Sigmoid colon (tissue), 7 donors: ENCODE measurements at regions of chr3 and their contacts with region 1.

Region 1: DNA sequence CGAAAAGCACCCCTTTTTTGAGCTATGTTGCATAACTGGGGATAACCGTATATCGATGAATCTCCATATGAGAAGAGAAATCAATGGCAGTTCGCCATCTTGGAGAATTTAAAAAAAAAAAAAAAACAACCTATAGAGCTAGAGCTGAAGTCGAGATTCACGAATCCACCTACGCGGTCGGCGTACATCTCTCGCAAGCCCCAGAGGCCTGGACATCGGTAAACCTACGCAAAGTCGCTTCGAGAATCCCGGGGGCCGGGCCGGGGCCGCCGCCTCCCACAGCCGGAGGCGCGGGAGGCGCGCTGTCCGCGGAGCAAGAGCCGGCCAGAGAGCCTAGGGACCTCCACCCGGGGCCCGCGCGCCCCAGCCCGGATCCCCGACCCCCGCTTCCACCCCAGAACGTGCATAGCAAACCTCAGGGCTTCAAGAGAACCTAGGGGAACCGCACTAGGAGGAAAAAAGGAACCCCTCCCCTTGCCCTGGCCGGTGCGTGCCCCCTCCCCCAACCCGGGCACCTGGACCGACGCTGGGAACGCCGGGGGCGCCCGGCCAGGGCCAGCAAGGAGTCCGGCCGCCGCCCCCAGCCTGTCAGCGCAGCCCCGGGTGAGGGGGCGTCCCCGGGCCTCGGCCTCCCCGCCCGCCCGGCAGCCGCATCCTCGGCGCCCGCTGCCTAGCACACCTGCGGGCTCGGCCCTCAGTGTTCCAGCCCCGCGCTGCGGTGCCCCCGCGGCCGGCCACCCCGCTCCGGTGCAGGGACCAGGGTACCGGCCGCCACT is 567 bp downstream of the PFN2 start:
- DNase-seq: peak; percentile 94
- H3K4me3 ChIP-seq: peak overlapping the region; percentile 79 to 98 (median 86)
- H3K27ac ChIP-seq: peak overlapping the region; percentile 92 to 98 (median 97)
- H3K4me1 ChIP-seq: peaks cover 0 to 47% (median 25%) of the 10 kb centered on the region in 4 donors
- H3K27me3 ChIP-seq: no peaks in the 10 kb centered on the region
- CTCF ChIP-seq: no peak
- EP300 ChIP-seq: no peak
- POLR2A ChIP-seq: peak in 1 of 2 donors; percentile 41

Region 2: GRCh38 chr3:150083655-150084042 is 113.5 kb after region 1 on chr3:
- intact Hi-C with region 1: loop called (anchors 2 kb)
- DNase-seq: peak; percentile 80
- H3K4me3 ChIP-seq: peak overlapping the region in 3 of 4 donors; percentile 26 to 40 (median 33)
- H3K27ac ChIP-seq: peak overlapping the region; percentile 18 to 77 (median 74)
- H3K4me1 ChIP-seq: peaks cover 0 to 33% (median 28%) of the 10 kb centered on the region in 4 donors
- H3K27me3 ChIP-seq: no peaks in the 10 kb centered on the region
- CTCF ChIP-seq: no peak
- EP300 ChIP-seq: peak in 2 of 4 donors; percentile 44 to 53
- POLR2A ChIP-seq: no peak

Region 3: DNA sequence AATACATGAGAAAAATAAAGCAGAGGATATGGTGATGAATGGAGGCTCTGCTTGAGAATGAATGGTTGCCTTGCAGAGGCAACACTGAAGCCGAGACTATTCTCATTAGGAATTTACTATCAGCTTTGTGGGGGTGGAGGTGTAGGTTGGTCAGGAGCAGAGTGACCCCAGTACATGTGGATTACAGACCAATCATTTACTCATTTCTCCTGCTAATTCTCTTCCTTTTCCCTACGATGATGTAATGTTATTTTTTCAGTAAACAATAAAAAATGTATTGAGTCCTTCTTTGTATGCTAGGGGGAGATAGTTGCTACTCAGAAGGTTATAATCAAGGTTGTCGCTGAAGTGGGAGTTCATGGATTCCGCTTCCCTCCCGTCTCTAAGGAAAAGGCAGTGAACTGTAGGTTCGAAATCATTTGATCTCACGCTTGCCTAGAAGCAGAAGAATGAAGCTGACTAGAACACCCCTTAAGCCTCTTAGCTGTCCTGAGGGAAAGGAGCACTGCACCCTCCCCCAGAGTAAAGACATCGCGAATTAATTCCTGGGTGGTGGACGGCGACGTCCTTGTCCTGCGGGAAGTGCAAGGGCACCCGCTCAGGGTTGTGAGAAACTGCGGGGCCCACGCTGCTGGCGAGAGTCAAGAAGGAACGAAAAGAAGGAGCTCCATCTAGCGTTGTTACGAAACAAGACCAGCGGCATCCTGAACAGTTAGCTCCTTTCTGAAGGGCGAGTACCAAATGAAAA is 213.7 kb after region 1 on chr3:
- intact Hi-C with region 1: loop called (anchors 1 kb)
- DNase-seq: peak; percentile 84
- H3K4me3 ChIP-seq: peak overlapping the region; percentile 7 to 39 (median 25)
- H3K27ac ChIP-seq: peak overlapping the region in 2 of 4 donors; percentile 2 to 58
- H3K4me1 ChIP-seq: peaks cover 0 to 20% (median 10%) of the 10 kb centered on the region in 4 donors
- H3K27me3 ChIP-seq: no peaks in the 10 kb centered on the region
- CTCF ChIP-seq: peak; percentile 38 to 59 (median 56)
- EP300 ChIP-seq: no peak
- POLR2A ChIP-seq: no peak

Region 4: GRCh38 chr3:150220799-150221198 is 250.7 kb after region 1 on chr3:
- intact Hi-C with region 1: loop called (anchors 2 kb)
- DNase-seq: no peak
- H3K4me3 ChIP-seq: peak overlapping the region in 3 of 4 donors; percentile 21 to 42 (median 34)
- H3K27ac ChIP-seq: peak overlapping the region in 1 of 4 donors; percentile 0
- H3K4me1 ChIP-seq: peaks cover 0 to 20% (median 14%) of the 10 kb centered on the region in 4 donors
- H3K27me3 ChIP-seq: no peaks in the 10 kb centered on the region
- CTCF ChIP-seq: no peak
- EP300 ChIP-seq: no peak
- POLR2A ChIP-seq: no peak

Region 5: GRCh38 chr3:150495563-150496168 is 525.5 kb after region 1 on chr3:
- intact Hi-C with region 1: loop called (anchors 5 kb)
- DNase-seq: no peak
- H3K4me3 ChIP-seq: no peak overlapping the region
- H3K27ac ChIP-seq: no peak overlapping the region
- H3K4me1 ChIP-seq: no peaks in the 10 kb centered on the region
- H3K27me3 ChIP-seq: no peaks in the 10 kb centered on the region
- CTCF ChIP-seq: peak; percentile 38 to 81 (median 70)
- EP300 ChIP-seq: no peak
- POLR2A ChIP-seq: no peak

Region 6: DNA sequence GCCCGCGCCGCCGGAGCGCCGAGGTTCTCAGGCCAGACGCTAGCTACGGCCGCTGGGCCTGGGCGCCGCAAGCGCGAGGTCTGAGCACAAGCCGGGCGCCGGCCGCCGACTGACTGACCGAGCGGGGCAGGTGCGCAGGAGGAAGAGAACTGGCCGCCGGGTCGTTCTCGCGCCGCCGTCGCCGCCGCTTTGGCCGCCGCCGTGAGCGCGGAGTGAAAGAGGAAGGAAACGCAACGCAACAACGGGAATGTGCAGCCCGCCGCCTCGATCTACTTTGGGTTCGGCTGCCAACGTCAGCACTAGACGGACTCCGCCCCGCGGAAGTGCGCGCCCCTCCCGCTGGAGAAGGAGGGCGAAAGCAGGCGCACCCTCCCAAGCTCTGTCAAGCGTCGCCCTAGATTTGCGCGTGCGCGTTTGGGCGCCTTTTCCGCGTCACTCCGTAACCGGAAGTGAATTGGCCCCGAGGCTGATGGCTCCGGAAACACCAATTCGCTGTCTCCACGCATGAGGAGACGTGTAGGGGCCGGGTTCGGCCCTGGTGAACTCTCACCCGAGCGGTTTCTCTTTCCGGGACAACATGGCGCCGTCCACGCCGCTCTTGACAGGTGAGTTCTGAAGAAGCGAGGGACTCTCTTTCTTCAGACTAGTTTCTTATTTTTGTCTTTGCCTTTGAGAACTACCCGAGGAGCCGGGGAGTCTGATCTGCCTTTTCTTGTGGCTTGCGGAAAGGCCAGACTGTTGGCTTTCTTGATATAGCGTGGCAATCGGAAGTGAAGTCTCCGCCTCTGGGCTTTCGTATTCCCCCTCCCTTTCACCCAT is 576.3 kb after region 1 on chr3 and contains the starts of genes EIF2A and SERP1:
- intact Hi-C with region 1: loop called (anchors 5 kb)
- DNase-seq: peak; percentile 99
- H3K4me3 ChIP-seq: peak within 1 kb of the TSS; percentile 67 to 84 (median 74)
- H3K27ac ChIP-seq: peak within 1 kb of the TSS; percentile 96 to 99 (median 98)
- H3K4me1 ChIP-seq: peaks cover 0 to 44% (median 32%) of the 10 kb centered on the region in 4 donors
- H3K27me3 ChIP-seq: no peaks in the 10 kb centered on the region
- CTCF ChIP-seq: no peak
- EP300 ChIP-seq: peak in 1 of 4 donors; percentile 88
- POLR2A ChIP-seq: peak; percentile 95 to 96
- total RNA-seq, gene EIF2A: 147 to 228 (median 160) TPM
- total RNA-seq, gene SERP1: 140 to 197 (median 185) TPM